IMR-90 (cell line): ENCODE measurements at regions of chr7 and their contacts with region 1.

Region 1: GRCh38 chr7:142535123-142535779 is 214.0 kb upstream of the PRSS1 start:
- DNase-seq: peak; percentile 92
- ATAC-seq: peak; percentile 98
- H3K4me3 ChIP-seq: no peak overlapping the region
- H3K27ac ChIP-seq: no peak overlapping the region; the same call in 1 of the 2 replicates
- H3K4me1 ChIP-seq: peaks cover 12% of the 10 kb centered on the region
- H3K27me3 ChIP-seq: no peaks in the 10 kb centered on the region
- CTCF ChIP-seq: peak; percentile 98
- POLR2A ChIP-seq: peak; percentile 42; the same call in 1 of the 2 replicates
- RAD21 ChIP-seq: peak; percentile 98

Region 2: DNA sequence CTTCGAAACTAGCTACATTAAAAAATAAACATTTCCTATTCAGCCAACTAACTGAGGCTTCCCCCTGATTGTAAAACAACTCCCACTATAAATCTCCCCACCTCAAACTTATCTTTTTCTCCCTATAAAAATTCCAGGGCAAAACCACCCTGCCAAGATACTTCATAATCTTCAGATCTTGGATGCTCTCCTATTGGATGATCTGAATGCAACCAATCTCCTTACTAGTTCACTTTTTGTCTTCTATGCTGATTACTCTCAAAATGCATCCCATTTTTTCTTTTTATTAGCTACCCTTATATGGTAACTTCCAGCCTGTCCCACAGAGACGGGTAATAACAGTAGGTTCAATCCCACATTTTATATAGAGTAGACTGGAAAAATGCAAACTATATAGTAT is 262.4 kb before region 1 on chr7:
- CTCF ChIA-PET with region 1: no interaction called
- POLR2A ChIA-PET with region 1: no interaction called
- dilution Hi-C with region 1: no loop called
- in situ Hi-C with region 1: no loop called
- intact Hi-C with region 1: no loop called
- DNase-seq: no peak
- ATAC-seq: no peak
- H3K4me3 ChIP-seq: no peak overlapping the region
- H3K27ac ChIP-seq: no peak overlapping the region
- H3K4me1 ChIP-seq: no peaks in the 10 kb centered on the region
- H3K27me3 ChIP-seq: no peaks in the 10 kb centered on the region
- CTCF ChIP-seq: no peak
- POLR2A ChIP-seq: no peak
- RAD21 ChIP-seq: no peak

Region 3: DNA sequence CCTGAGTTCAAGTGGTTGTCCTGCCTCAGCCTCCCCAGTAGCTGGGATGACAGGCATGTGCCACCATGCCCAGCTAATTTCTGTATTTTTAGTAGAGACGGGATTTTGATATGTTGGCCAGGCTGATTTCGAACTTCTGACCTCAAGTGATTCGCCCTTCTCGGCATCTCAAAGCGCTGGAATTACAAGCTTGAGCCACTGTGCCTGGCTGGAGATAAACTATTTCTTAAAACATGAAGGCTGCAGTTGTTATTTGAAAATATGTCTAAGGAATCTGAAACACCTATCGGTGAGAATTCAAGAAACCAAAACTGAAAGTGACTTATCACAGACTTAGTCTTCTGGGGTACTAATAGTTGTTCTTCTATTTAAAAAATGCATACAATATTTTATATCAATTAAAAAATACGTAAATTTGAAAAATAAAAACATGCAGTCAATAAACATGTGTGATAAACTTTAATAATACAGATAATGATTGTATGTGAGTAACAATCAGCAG is 100.5 kb before region 1 on chr7:
- CTCF ChIA-PET with region 1: no interaction called
- POLR2A ChIA-PET with region 1: no interaction called
- dilution Hi-C with region 1: no loop called
- in situ Hi-C with region 1: no loop called
- intact Hi-C with region 1: no loop called
- DNase-seq: no peak
- ATAC-seq: no peak
- H3K4me3 ChIP-seq: no peak overlapping the region
- H3K27ac ChIP-seq: no peak overlapping the region
- H3K4me1 ChIP-seq: peaks cover 7% of the 10 kb centered on the region
- H3K27me3 ChIP-seq: no peaks in the 10 kb centered on the region
- CTCF ChIP-seq: no peak
- POLR2A ChIP-seq: no peak
- RAD21 ChIP-seq: no peak

Region 4: GRCh38 chr7:142523821-142524460 is 11.3 kb before region 1 on chr7:
- CTCF ChIA-PET with region 1: interaction called, 16 read pairs
- POLR2A ChIA-PET with region 1: interaction called, 3 read pairs
- dilution Hi-C with region 1: no loop called
- in situ Hi-C with region 1: no loop called
- intact Hi-C with region 1: no loop called
- DNase-seq: no peak
- ATAC-seq: peak; percentile 72
- H3K4me3 ChIP-seq: no peak overlapping the region
- H3K27ac ChIP-seq: no peak overlapping the region
- H3K4me1 ChIP-seq: no peaks in the 10 kb centered on the region
- H3K27me3 ChIP-seq: peaks cover 20% of the 10 kb centered on the region
- CTCF ChIP-seq: peak; percentile 22; the same call in 1 of the 2 replicates
- POLR2A ChIP-seq: no peak
- RAD21 ChIP-seq: no peak

Region 5: DNA sequence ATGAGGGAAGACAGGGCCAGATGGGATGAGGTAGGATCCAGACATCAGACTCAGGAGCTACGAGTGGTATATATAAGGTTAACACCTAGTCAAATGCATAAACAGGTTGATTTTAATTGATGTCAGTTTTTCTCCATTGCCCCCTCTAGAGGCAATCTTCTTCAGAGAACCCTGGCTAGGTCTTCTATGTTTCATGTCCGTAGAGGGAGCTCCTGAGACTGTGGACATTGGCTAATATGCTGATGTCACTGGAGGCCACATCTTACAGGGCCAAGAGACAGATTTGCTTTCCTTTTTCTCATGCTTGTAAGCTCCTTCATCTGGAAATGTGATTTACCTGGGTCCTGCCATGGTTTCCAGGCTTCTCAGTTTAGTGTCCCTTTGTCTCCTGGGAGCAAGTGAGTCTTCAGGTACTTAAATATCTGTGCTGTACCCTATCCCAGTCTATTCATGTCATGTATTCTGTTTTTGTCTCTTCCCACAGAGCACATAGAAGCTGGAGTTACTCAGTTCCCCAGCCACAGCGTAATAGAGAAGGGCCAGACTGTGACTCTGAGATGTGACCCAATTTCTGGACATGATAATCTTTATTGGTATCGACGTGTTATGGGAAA is 52.4 kb after region 1 on chr7:
- CTCF ChIA-PET with region 1: interaction called, 24 read pairs
- POLR2A ChIA-PET with region 1: no interaction called
- dilution Hi-C with region 1: no loop called
- in situ Hi-C with region 1: no loop called
- intact Hi-C with region 1: loop called (anchors 1 kb)
- DNase-seq: peak; percentile 81
- ATAC-seq: peak; percentile 84
- H3K4me3 ChIP-seq: no peak overlapping the region
- H3K27ac ChIP-seq: no peak overlapping the region
- H3K4me1 ChIP-seq: peaks cover 7% of the 10 kb centered on the region
- H3K27me3 ChIP-seq: no peaks in the 10 kb centered on the region
- CTCF ChIP-seq: peak; percentile 99
- POLR2A ChIP-seq: no peak
- RAD21 ChIP-seq: peak; percentile 43

Region 6: GRCh38 chr7:142632291-142633134 is 97.3 kb after region 1 on chr7:
- CTCF ChIA-PET with region 1: interaction called, 20 read pairs
- POLR2A ChIA-PET with region 1: no interaction called
- dilution Hi-C with region 1: no loop called
- in situ Hi-C with region 1: no loop called
- intact Hi-C with region 1: loop called (anchors 1 kb)
- DNase-seq: peak; percentile 60
- ATAC-seq: peak; percentile 98
- H3K4me3 ChIP-seq: no peak overlapping the region
- H3K27ac ChIP-seq: no peak overlapping the region
- H3K4me1 ChIP-seq: peaks cover 3% of the 10 kb centered on the region
- H3K27me3 ChIP-seq: peaks cover 4% of the 10 kb centered on the region; the same call in 1 of the 2 replicates
- CTCF ChIP-seq: peak; percentile 73
- POLR2A ChIP-seq: no peak
- RAD21 ChIP-seq: peak; percentile 68

Region 7: GRCh38 chr7:142733271-142733670 is 198.0 kb after region 1 on chr7:
- CTCF ChIA-PET with region 1: no interaction called
- POLR2A ChIA-PET with region 1: no interaction called
- dilution Hi-C with region 1: no loop called
- in situ Hi-C with region 1: no loop called
- intact Hi-C with region 1: loop called (anchors 1 kb)
- DNase-seq: no peak
- ATAC-seq: no peak
- H3K4me3 ChIP-seq: no peak overlapping the region
- H3K27ac ChIP-seq: no peak overlapping the region
- H3K4me1 ChIP-seq: no peaks in the 10 kb centered on the region
- H3K27me3 ChIP-seq: peaks cover 2% of the 10 kb centered on the region; the same call in 1 of the 2 replicates
- CTCF ChIP-seq: no peak
- POLR2A ChIP-seq: no peak
- RAD21 ChIP-seq: no peak

Region 8: DNA sequence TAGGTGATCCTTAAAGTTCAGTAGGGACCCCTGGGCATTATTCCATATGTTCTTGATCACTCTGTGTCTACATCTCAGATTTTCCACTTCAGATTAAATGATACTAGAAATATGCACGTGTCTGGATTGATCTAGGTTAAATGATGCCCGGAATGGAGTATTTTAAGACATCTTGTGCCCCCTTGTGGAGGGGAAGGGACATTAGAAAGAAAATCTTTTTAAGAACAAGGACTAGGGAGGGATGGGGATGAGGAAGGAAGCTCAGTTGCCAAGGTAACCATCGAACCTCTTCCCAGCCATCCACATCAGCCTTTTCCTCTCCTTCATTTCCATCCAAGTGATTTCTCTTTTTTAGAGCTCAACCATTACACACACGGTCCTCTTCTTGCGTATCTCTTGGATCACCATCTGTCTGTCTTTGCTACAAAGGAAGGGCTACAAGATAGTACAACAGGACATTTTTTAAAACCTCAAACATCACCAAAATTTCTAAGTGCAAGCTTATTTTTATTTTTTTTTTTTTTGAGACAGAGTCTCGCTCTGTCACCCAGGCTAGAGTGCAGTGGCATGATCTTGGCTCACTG is 276.0 kb after region 1 on chr7:
- CTCF ChIA-PET with region 1: interaction called, 8 read pairs
- POLR2A ChIA-PET with region 1: no interaction called
- dilution Hi-C with region 1: no loop called
- in situ Hi-C with region 1: no loop called
- intact Hi-C with region 1: loop called (anchors 1 kb)
- DNase-seq: peak; percentile 54
- ATAC-seq: peak; percentile 84
- H3K4me3 ChIP-seq: no peak overlapping the region
- H3K27ac ChIP-seq: no peak overlapping the region
- H3K4me1 ChIP-seq: no peaks in the 10 kb centered on the region
- H3K27me3 ChIP-seq: peaks cover 2% of the 10 kb centered on the region; the same call in 1 of the 2 replicates
- CTCF ChIP-seq: peak; percentile 71
- POLR2A ChIP-seq: no peak
- RAD21 ChIP-seq: peak; percentile 60